ENCODE measurements at regions of chr3 and their contacts with region 1.

Region 1: DNA sequence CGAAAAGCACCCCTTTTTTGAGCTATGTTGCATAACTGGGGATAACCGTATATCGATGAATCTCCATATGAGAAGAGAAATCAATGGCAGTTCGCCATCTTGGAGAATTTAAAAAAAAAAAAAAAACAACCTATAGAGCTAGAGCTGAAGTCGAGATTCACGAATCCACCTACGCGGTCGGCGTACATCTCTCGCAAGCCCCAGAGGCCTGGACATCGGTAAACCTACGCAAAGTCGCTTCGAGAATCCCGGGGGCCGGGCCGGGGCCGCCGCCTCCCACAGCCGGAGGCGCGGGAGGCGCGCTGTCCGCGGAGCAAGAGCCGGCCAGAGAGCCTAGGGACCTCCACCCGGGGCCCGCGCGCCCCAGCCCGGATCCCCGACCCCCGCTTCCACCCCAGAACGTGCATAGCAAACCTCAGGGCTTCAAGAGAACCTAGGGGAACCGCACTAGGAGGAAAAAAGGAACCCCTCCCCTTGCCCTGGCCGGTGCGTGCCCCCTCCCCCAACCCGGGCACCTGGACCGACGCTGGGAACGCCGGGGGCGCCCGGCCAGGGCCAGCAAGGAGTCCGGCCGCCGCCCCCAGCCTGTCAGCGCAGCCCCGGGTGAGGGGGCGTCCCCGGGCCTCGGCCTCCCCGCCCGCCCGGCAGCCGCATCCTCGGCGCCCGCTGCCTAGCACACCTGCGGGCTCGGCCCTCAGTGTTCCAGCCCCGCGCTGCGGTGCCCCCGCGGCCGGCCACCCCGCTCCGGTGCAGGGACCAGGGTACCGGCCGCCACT is 567 bp downstream of the PFN2 start:
- DNase-seq: peak; percentile 39
- ATAC-seq: peak; percentile 82
- H3K4me3 ChIP-seq: peak overlapping the region; percentile 66
- H3K27ac ChIP-seq: peak overlapping the region; percentile 15; the same call in 1 of the 2 replicates
- H3K4me1 ChIP-seq: no peaks in the 10 kb centered on the region
- H3K27me3 ChIP-seq: 0 out of 4 replicates have a peak, but pooled peaks cover 0 to 4% of the 10 kb centered on the region in 2 experiments
- CTCF ChIP-seq: no peak
- EP300 ChIP-seq: no peak
- POLR2A ChIP-seq: no peak
- RAD21 ChIP-seq: no peak

Region 2: GRCh38 chr3:148631124-148631903 is 1338.8 kb before region 1 on chr3:
- CTCF ChIA-PET with region 1: no interaction called
- POLR2A ChIA-PET with region 1: no interaction called
- RAD21 ChIA-PET with region 1: no interaction called
- SMC1A ChIA-PET with region 1: no interaction called
- in situ Hi-C with region 1: no loop called
- intact Hi-C with region 1: no loop called
- DNase-seq: no peak
- ATAC-seq: no peak
- H3K4me3 ChIP-seq: no peak overlapping the region
- H3K27ac ChIP-seq: no peak overlapping the region
- H3K4me1 ChIP-seq: no peaks in the 10 kb centered on the region
- H3K27me3 ChIP-seq: no peaks in the 10 kb centered on the region
- CTCF ChIP-seq: 0 out of 6 replicates have a peak, but pooled peaks of 1 of the 3 experiments have one; percentile 3
- EP300 ChIP-seq: no peak
- POLR2A ChIP-seq: no peak
- RAD21 ChIP-seq: no peak

Region 3: GRCh38 chr3:149801639-149802038 is 168.5 kb before region 1 on chr3:
- CTCF ChIA-PET with region 1: no interaction called
- POLR2A ChIA-PET with region 1: no interaction called
- RAD21 ChIA-PET with region 1: no interaction called
- SMC1A ChIA-PET with region 1: no interaction called
- in situ Hi-C with region 1: no loop called
- intact Hi-C with region 1: no loop called
- DNase-seq: no peak
- ATAC-seq: no peak
- H3K4me3 ChIP-seq: no peak overlapping the region
- H3K27ac ChIP-seq: no peak overlapping the region
- H3K4me1 ChIP-seq: no peaks in the 10 kb centered on the region
- H3K27me3 ChIP-seq: no peaks in the 10 kb centered on the region
- CTCF ChIP-seq: no peak
- EP300 ChIP-seq: no peak
- POLR2A ChIP-seq: no peak
- RAD21 ChIP-seq: no peak

Region 4: DNA sequence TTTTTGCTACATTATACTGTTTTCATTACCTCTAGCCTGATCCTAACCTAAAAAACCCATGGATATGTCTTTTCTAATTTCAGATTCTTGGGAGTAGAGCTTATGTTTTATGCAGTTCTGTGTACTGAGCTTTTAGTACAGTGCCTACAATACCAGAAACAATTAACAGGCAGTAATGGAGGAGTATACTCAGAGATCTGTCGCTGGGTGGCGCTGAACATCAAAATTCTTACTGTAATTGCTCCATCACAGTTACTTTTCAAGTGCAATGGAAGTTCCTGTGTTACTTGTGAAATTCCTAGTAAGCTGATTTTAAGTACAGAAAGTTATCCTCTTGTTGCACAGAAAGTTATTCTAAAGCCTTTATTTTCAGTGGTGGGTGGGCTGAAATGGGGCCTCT is 90.3 kb before region 1 on chr3:
- CTCF ChIA-PET with region 1: interaction called, 16 read pairs
- POLR2A ChIA-PET with region 1: no interaction called
- RAD21 ChIA-PET with region 1: interaction called, 11 read pairs
- SMC1A ChIA-PET with region 1: interaction called, 9 read pairs
- in situ Hi-C with region 1: no loop called
- intact Hi-C with region 1: no loop called
- DNase-seq: no peak
- ATAC-seq: peak; percentile 95
- H3K4me3 ChIP-seq: no peak overlapping the region
- H3K27ac ChIP-seq: no peak overlapping the region
- H3K4me1 ChIP-seq: no peaks in the 10 kb centered on the region
- H3K27me3 ChIP-seq: no peaks in the 10 kb centered on the region
- CTCF ChIP-seq: peak; percentile 43 to 59 (median 55); a peak in 5 of 6 replicates
- EP300 ChIP-seq: no peak
- POLR2A ChIP-seq: no peak
- RAD21 ChIP-seq: peak; percentile 30; the same call in 1 of the 2 replicates

Region 5: DNA sequence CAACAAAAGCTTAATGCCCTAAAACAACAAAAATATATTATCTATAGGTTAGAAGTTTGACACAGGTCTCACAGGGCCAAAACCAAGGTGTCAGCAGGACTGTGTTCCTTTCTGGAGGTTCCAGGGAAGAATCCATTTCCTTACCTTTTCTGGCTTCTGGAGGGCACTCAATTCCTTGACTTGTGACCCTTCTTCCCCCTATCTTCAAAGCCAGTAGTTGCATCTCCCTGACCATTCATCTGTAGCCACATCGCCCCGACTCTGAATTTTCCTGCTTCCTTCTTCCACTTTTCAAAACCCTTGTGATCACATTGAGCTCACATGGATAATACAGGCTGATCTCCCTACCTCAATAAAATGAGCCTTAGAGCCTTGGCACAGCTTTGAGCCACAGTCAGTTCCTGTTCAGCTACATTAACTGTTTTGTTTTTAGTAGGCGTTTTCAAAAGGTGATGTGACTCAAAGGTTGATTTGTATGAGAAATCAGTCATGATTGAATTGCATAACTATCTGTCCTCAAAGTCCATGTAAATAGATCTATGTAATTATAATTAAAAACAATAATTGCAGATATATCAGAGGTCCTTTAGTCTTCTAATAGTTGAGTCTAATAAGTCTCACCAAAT is 11.8 kb before region 1 on chr3:
- CTCF ChIA-PET with region 1: interaction called, 42 read pairs
- POLR2A ChIA-PET with region 1: no interaction called
- RAD21 ChIA-PET with region 1: interaction called, 7 read pairs
- SMC1A ChIA-PET with region 1: interaction called, 9 read pairs
- in situ Hi-C with region 1: no loop called
- intact Hi-C with region 1: no loop called
- DNase-seq: no peak
- ATAC-seq: peak; percentile 53
- H3K4me3 ChIP-seq: no peak overlapping the region
- H3K27ac ChIP-seq: no peak overlapping the region
- H3K4me1 ChIP-seq: no peaks in the 10 kb centered on the region
- H3K27me3 ChIP-seq: no peaks in the 10 kb centered on the region
- CTCF ChIP-seq: no peak
- EP300 ChIP-seq: no peak
- POLR2A ChIP-seq: no peak
- RAD21 ChIP-seq: no peak

Region 6: GRCh38 chr3:150114873-150115540 is 144.9 kb after region 1 on chr3:
- CTCF ChIA-PET with region 1: interaction called, 3 read pairs
- POLR2A ChIA-PET with region 1: no interaction called
- RAD21 ChIA-PET with region 1: no interaction called
- SMC1A ChIA-PET with region 1: interaction called, 4 read pairs
- in situ Hi-C with region 1: no loop called
- intact Hi-C with region 1: loop called (anchors 5 kb)
- DNase-seq: peak; percentile 69
- ATAC-seq: peak; percentile 95
- H3K4me3 ChIP-seq: peak overlapping the region; percentile 19; the same call in 1 of the 2 replicates
- H3K27ac ChIP-seq: peak overlapping the region; percentile 43; the same call in 1 of the 2 replicates
- H3K4me1 ChIP-seq: peaks cover 27% of the 10 kb centered on the region
- H3K27me3 ChIP-seq: no peaks in the 10 kb centered on the region
- CTCF ChIP-seq: no peak
- EP300 ChIP-seq: peak; percentile 70 to 89; a peak in 3 of 4 replicates
- POLR2A ChIP-seq: no peak
- RAD21 ChIP-seq: no peak

Region 7: GRCh38 chr3:150216041-150216811 is 246.1 kb after region 1 on chr3:
- CTCF ChIA-PET with region 1: interaction called, 66 read pairs
- POLR2A ChIA-PET with region 1: no interaction called
- RAD21 ChIA-PET with region 1: interaction called, 13 read pairs
- SMC1A ChIA-PET with region 1: interaction called, 19 read pairs
- in situ Hi-C with region 1: loop called (anchors 5 kb)
- intact Hi-C with region 1: loop called (anchors 1 kb)
- DNase-seq: no peak
- ATAC-seq: no peak; the same call in 1 of the 3 replicates
- H3K4me3 ChIP-seq: no peak overlapping the region
- H3K27ac ChIP-seq: no peak overlapping the region
- H3K4me1 ChIP-seq: no peaks in the 10 kb centered on the region
- H3K27me3 ChIP-seq: no peaks in the 10 kb centered on the region
- CTCF ChIP-seq: no peak
- EP300 ChIP-seq: no peak
- POLR2A ChIP-seq: no peak
- RAD21 ChIP-seq: no peak

Region 8: GRCh38 chr3:150521463-150521862 is 551.3 kb after region 1 on chr3:
- CTCF ChIA-PET with region 1: no interaction called
- POLR2A ChIA-PET with region 1: no interaction called
- RAD21 ChIA-PET with region 1: no interaction called
- SMC1A ChIA-PET with region 1: no interaction called
- in situ Hi-C with region 1: loop called (anchors 25 kb)
- intact Hi-C with region 1: no loop called
- DNase-seq: no peak
- ATAC-seq: no peak
- H3K4me3 ChIP-seq: no peak overlapping the region
- H3K27ac ChIP-seq: no peak overlapping the region
- H3K4me1 ChIP-seq: no peaks in the 10 kb centered on the region
- H3K27me3 ChIP-seq: no peaks in the 10 kb centered on the region
- CTCF ChIP-seq: no peak
- EP300 ChIP-seq: no peak
- POLR2A ChIP-seq: no peak
- RAD21 ChIP-seq: no peak